ENCODE measurements at regions of chr3 and their contacts with region 1.

Region 1: GRCh38 chr3:102163036-102163827 is 271.6 kb upstream of the ZPLD1 start:
- DNase-seq: peak; percentile 59
- ATAC-seq: peak; percentile 95

Region 2: DNA sequence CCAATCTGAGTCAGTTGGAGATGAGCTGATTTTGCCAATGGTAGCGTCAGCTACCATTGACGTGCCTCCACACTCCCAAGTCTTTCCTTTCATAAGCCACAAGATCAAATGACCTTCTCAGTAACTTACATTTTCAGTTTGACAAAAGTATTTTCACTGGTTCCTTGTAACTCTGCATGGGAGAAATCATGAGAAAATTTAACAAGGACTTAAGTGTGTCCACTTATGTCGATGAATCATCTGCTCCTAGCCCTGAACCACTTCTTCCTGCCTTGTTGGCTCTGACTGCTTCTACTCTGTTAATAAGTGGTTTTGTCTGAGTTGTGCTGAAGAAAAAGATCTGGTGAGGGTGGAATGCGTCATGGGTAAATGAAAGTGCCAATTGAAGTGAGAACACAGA is 212.7 kb before region 1 on chr3:
- intact Hi-C with region 1: no loop called
- DNase-seq: no peak
- ATAC-seq: peak; percentile 53

Region 3: DNA sequence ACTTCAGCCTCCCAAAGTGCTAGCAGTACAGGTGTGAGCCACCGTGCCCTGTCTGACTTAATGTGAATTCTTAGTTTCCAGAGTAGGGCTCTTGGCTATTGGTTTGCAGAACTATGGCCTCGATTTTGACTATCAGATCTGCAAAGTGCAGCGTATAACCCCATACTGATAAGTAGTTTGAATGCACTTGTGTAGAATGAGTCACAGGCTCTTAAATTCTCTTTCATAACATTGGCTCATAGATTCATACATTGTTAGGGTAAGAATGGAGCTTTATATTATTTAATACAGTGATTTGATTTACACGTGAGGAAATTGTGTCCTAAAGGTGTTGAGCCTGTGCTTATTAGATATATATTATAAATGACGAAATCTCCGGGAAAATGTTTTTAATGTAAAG is 381.5 kb after region 1 on chr3:
- intact Hi-C with region 1: loop called (anchors 5 kb)
- DNase-seq: no peak
- ATAC-seq: no peak

Measured in left ventricle myocardium superior (tissue), 1 donor.